Mammary epithelial cell (primary cell): ENCODE measurements at regions of chr18 and their contacts with region 1.

Region 1: GRCh38 chr18:37378336-37379010 is 187.1 kb downstream of the CELF4 start:
- DNase-seq: no peak
- H3K4me3 ChIP-seq: no peak overlapping the region
- H3K27ac ChIP-seq: no peak overlapping the region
- H3K4me1 ChIP-seq: no peaks in the 10 kb centered on the region
- H3K27me3 ChIP-seq: peaks cover 5% of the 10 kb centered on the region
- CTCF ChIP-seq: no peak

Region 2: GRCh38 chr18:37266290-37266689 is 112.2 kb before region 1 on chr18:
- CTCF ChIA-PET with region 1: no interaction called
- dilution Hi-C with region 1: no loop called
- in situ Hi-C with region 1: no loop called
- intact Hi-C with region 1: no loop called
- DNase-seq: no peak
- H3K4me3 ChIP-seq: no peak overlapping the region
- H3K27ac ChIP-seq: no peak overlapping the region
- H3K4me1 ChIP-seq: no peaks in the 10 kb centered on the region
- H3K27me3 ChIP-seq: no peaks in the 10 kb centered on the region
- CTCF ChIP-seq: peak in 1 of 2 donors; percentile 19

Region 3: GRCh38 chr18:37299471-37300304 is 78.8 kb before region 1 on chr18:
- CTCF ChIA-PET with region 1: no interaction called
- dilution Hi-C with region 1: loop called (anchors 5 kb)
- in situ Hi-C with region 1: no loop called
- intact Hi-C with region 1: no loop called
- DNase-seq: peak; percentile 91
- H3K4me3 ChIP-seq: no peak overlapping the region
- H3K27ac ChIP-seq: peak overlapping the region; percentile 16
- H3K4me1 ChIP-seq: peaks cover 12% of the 10 kb centered on the region
- H3K27me3 ChIP-seq: no peaks in the 10 kb centered on the region
- CTCF ChIP-seq: no peak

Region 4: GRCh38 chr18:37445368-37445767 is 66.9 kb after region 1 on chr18:
- CTCF ChIA-PET with region 1: no interaction called
- dilution Hi-C with region 1: loop called (anchors 5 kb)
- in situ Hi-C with region 1: no loop called
- intact Hi-C with region 1: no loop called
- DNase-seq: no peak
- H3K4me3 ChIP-seq: no peak overlapping the region
- H3K27ac ChIP-seq: no peak overlapping the region
- H3K4me1 ChIP-seq: no peaks in the 10 kb centered on the region
- H3K27me3 ChIP-seq: no peaks in the 10 kb centered on the region
- CTCF ChIP-seq: no peak

Region 5: DNA sequence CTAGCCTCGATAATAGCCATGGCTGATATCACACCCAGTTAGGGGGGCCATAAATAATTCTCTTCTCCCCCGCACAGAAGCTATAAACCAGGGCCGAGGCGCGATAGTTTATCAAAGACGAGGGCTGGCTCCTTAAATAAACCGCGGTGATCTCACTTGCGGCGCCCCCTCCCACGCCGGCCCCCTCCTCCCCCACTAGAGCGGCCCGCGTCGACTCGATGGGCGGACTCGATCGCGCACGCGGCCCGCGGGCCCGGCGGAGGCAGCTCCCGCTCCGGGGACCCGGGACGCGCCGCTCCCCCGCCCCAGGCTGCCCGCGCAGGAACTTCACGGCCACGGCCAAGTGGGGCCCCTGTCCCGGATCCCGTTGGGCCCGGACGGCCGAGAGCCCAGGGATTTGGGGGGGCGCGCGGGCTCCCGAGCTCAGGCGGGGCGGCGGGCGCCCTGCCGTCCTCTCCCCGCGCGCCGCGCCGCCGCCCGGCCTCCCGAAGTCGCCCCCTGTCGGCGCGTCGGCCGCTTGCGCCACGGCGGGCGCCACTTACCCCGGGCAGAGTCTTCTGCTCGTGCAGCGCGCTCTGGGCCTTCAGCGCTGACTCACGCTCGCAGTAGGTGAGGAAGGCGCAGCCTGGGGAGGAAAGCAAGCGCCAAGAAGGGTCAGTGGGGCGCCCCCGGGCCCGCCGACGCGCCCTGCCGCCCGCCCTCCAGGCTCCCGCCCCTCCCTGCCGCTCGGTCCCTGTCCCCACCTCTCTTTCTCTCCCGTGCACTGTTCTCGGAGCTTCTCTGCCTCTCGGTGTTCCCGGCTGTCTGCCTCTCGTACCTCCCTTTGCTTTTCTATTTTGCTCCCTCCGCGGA is 106.7 kb after region 1 on chr18:
- CTCF ChIA-PET with region 1: no interaction called
- dilution Hi-C with region 1: loop called (anchors 5 kb)
- in situ Hi-C with region 1: no loop called
- intact Hi-C with region 1: no loop called
- DNase-seq: peak; percentile 29
- H3K4me3 ChIP-seq: no peak overlapping the region
- H3K27ac ChIP-seq: no peak overlapping the region
- H3K4me1 ChIP-seq: peaks cover 3% of the 10 kb centered on the region
- H3K27me3 ChIP-seq: peaks cover 11% of the 10 kb centered on the region
- CTCF ChIP-seq: peak in 1 of 2 donors; percentile 13